GM12878 (cell line): ENCODE measurements at regions of chr5 and their contacts with region 1.

Region 1: DNA sequence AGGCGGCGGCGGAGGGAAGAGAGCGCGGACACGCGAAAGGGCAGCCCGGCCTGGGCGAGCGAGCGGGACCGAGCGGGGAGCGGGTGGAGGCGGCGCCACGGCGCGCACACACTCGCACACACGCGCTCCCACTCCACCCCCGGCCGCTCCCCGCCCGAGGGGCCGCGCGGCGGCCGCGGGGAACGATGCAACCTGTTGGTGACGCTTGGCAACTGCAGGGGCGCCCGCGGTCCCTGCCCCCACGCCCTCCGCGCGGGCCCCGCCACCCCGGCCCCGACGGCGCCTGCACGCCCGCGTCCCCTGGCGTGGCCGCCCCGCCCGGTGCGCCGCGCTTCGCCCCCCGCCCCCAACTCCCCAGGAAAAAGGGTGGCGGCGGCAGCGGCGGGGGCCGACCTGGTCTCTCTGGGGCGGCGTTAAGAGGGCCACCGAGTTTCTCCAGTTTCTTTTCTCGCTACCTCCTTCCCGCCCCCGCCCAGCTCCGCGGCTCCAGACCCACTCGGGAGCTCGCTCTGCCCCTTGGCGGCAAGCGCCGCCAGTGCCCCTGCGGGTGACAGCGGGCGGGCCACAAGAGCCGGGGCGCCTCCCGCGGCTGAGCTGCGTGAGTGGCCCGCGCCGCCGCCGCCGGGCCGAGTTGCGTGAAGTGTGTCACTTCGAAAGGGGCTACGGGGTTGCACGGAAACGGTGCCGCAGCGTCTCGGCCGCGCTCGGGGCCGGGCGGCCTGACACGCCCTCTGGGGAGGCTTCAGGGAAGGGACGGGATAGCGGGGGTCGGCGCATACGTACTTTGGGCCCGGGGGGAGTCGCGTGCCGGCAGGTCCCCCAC is at the start of gene NR3C1:
- DNase-seq: no peak
- ATAC-seq: peak; percentile 51
- H3K4me3 ChIP-seq: peak within 1 kb of the TSS; percentile 83
- H3K27ac ChIP-seq: peak within 1 kb of the TSS; percentile 99
- H3K4me1 ChIP-seq: no peaks in the 10 kb centered on the region
- H3K27me3 ChIP-seq: no peaks in the 10 kb centered on the region
- CTCF ChIP-seq: peak; percentile 38 to 76 (median 64); a peak in 5 of 6 replicates
- EP300 ChIP-seq: peak; percentile 25 to 38; a peak in 2 of 4 replicates
- POLR2A ChIP-seq: peak; percentile 78
- RAD21 ChIP-seq: peak; percentile 67
- polyA plus RNA-seq, gene NR3C1: 89.0 to 119 TPM

Region 2: GRCh38 chr5:143023411-143024096 is 380.2 kb before region 1 on chr5:
- CTCF ChIA-PET with region 1: interaction called, 11 read pairs
- POLR2A ChIA-PET with region 1: interaction called, 6 read pairs
- RAD21 ChIA-PET with region 1: interaction called, 17 read pairs
- SMC1A ChIA-PET with region 1: interaction called, 12 read pairs
- in situ Hi-C with region 1: loop called (anchors 10 kb)
- intact Hi-C with region 1: no loop called
- DNase-seq: peak; percentile 87
- ATAC-seq: peak; percentile 65
- H3K4me3 ChIP-seq: 0 out of 2 replicates have a peak overlapping the region, but pooled peaks have one; percentile 21
- H3K27ac ChIP-seq: peak overlapping the region; percentile 95
- H3K4me1 ChIP-seq: peaks cover 77% of the 10 kb centered on the region
- H3K27me3 ChIP-seq: no peaks in the 10 kb centered on the region
- CTCF ChIP-seq: no peak; a peak in 1 of 6 replicates
- EP300 ChIP-seq: peak; percentile 52 to 66; a peak in 2 of 4 replicates
- POLR2A ChIP-seq: peak; percentile 60
- RAD21 ChIP-seq: peak; percentile 36

Region 3: GRCh38 chr5:143200781-143201398 is 202.9 kb before region 1 on chr5:
- CTCF ChIA-PET with region 1: no interaction called
- POLR2A ChIA-PET with region 1: interaction called, 6 read pairs
- RAD21 ChIA-PET with region 1: interaction called, 61 read pairs
- SMC1A ChIA-PET with region 1: interaction called, 70 read pairs
- in situ Hi-C with region 1: no loop called
- intact Hi-C with region 1: loop called (anchors 2 kb)
- DNase-seq: no peak
- ATAC-seq: peak; percentile 69
- H3K4me3 ChIP-seq: no peak overlapping the region
- H3K27ac ChIP-seq: peak overlapping the region; percentile 14; the same call in 1 of the 2 replicates
- H3K4me1 ChIP-seq: peaks cover 17% of the 10 kb centered on the region
- H3K27me3 ChIP-seq: no peaks in the 10 kb centered on the region
- CTCF ChIP-seq: no peak
- EP300 ChIP-seq: no peak
- POLR2A ChIP-seq: no peak
- RAD21 ChIP-seq: no peak

Region 4: GRCh38 chr5:143222287-143223231 is 181.2 kb before region 1 on chr5:
- CTCF ChIA-PET with region 1: interaction called, 5 read pairs
- POLR2A ChIA-PET with region 1: interaction called, 10 read pairs
- RAD21 ChIA-PET with region 1: interaction called, 121 read pairs
- SMC1A ChIA-PET with region 1: interaction called, 53 read pairs
- in situ Hi-C with region 1: loop called (anchors 5 kb)
- intact Hi-C with region 1: no loop called
- DNase-seq: peak; percentile 82
- ATAC-seq: peak; percentile 70
- H3K4me3 ChIP-seq: no peak overlapping the region
- H3K27ac ChIP-seq: peak overlapping the region; percentile 100
- H3K4me1 ChIP-seq: peaks cover 60% of the 10 kb centered on the region
- H3K27me3 ChIP-seq: no peaks in the 10 kb centered on the region
- CTCF ChIP-seq: no peak
- EP300 ChIP-seq: 0 out of 4 replicates have a peak, but pooled peaks of 1 of the 2 experiments have one; percentile 50
- POLR2A ChIP-seq: peak; percentile 50; the same call in 1 of the 2 replicates
- RAD21 ChIP-seq: no peak; the same call in 1 of the 2 replicates

Region 5: DNA sequence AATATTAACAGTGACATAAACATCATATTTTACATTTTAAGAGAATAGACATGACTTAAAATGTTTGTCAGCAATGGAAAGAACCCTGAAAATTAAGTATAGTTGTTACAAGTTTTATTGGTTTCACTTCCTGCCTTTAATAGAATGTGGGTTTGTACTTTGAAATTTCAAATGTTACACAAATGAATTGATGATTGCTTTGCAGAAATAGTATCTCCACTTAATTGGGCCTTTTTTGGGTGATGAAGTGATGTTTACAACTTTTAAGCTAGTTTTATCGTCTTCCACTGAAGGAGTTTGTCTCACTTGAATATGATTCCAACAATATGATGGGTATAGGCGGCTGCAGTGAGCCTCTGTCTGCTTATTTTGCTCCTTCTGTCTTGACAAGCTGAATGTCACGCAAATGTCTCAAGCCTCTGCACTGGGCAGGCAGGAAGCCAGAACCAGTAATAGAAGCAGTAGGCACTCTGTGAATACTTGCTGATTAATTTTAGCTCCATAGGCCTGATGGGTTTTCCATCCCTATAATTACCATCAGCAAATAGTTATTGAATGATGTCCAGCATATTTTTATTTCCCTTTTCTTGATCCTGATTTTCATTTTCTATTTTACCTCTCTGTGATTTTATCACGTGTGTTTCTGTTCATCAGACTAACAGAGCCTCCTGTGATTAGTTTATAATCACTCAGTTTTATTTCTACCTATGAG is 10.3 kb after region 1 on chr5:
- CTCF ChIA-PET with region 1: interaction called, 3 read pairs
- POLR2A ChIA-PET with region 1: interaction called, 17 read pairs
- RAD21 ChIA-PET with region 1: interaction called, 28 read pairs
- SMC1A ChIA-PET with region 1: interaction called, 13 read pairs
- in situ Hi-C with region 1: no loop called
- intact Hi-C with region 1: no loop called
- DNase-seq: no peak
- ATAC-seq: peak; percentile 71
- H3K4me3 ChIP-seq: peak overlapping the region; percentile 16; the same call in 1 of the 2 replicates
- H3K27ac ChIP-seq: peak overlapping the region; percentile 76
- H3K4me1 ChIP-seq: peaks cover 43% of the 10 kb centered on the region
- H3K27me3 ChIP-seq: no peaks in the 10 kb centered on the region
- CTCF ChIP-seq: no peak
- EP300 ChIP-seq: peak; percentile 21 to 63; a peak in 2 of 4 replicates
- POLR2A ChIP-seq: no peak
- RAD21 ChIP-seq: no peak

Region 6: DNA sequence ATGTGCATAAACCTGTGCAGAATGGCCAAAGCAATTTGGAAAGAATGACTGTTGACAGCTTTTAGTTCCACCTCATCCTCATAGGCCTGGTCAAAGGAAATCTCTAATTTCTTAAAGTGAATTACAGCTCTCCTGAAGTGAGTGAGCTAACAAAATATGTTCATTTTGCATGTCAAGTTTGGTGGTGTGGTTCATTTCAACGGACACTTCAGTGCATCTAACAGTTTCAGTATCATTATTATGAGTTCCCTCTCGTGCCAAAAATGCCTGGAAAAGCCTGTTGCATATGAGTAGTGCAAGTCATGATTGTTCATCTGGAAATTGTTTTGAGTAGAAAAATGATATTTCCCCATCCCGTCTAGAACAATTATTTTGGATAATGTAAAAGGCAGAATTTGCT is 354.9 kb after region 1 on chr5:
- CTCF ChIA-PET with region 1: no interaction called
- POLR2A ChIA-PET with region 1: no interaction called
- RAD21 ChIA-PET with region 1: no interaction called
- SMC1A ChIA-PET with region 1: no interaction called
- in situ Hi-C with region 1: no loop called
- intact Hi-C with region 1: loop called (anchors 5 kb)
- DNase-seq: peak; percentile 51
- ATAC-seq: peak; percentile 78
- H3K4me3 ChIP-seq: no peak overlapping the region; the same call in 1 of the 2 replicates
- H3K27ac ChIP-seq: peak overlapping the region; percentile 59; the same call in 1 of the 2 replicates
- H3K4me1 ChIP-seq: peaks cover 32% of the 10 kb centered on the region
- H3K27me3 ChIP-seq: no peaks in the 10 kb centered on the region
- CTCF ChIP-seq: no peak
- EP300 ChIP-seq: peak; percentile 48 to 79; a peak in 2 of 4 replicates
- POLR2A ChIP-seq: no peak
- RAD21 ChIP-seq: no peak